ENCODE measurements at regions of chr7 and their contacts with region 1.

Region 1: DNA sequence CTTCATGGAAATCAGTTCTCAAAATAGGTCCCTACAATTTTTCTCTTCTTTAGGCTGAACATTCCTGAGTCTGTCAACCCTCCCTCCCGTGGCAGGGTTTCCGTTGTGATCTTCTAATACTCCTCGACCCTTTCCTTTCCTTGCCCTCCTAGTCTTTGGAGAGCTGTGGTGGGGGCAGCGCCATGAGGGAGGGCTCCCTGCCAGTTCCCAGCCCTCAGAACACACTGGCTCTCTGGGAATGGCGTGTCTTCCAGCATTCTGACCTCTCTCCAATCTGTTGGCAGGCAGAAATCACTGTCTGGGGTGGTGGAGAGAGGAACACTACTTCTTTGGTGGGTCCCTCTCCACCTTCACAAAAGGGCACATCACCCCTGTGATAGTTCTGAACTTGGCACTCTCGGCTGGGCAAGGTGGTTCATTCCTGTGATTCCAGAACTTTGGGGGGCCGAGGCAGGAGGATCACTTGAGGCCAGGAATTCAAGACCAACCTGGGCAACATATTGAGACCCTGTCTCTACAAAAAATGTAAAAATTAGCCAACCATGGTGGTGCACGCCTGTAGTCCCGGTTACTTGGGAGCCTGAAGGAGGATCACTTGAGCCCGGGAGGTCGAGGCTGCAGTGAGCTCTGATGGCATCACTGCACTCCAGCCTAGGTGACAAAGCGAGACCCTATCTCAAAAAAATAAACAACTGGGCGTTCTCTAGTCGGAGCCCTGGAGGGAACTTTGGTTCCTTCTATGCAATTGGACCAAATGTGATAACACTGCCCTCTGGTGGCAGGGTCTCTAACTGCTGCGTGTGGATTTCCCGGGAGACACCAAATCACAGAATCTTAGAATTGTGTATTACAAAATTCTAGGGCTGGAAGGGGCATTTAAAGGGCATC is 13.1 kb upstream of the ARPC1A start:
- DNase-seq: peak; percentile 42 to 81
- ATAC-seq: peak; percentile 54

Region 2: DNA sequence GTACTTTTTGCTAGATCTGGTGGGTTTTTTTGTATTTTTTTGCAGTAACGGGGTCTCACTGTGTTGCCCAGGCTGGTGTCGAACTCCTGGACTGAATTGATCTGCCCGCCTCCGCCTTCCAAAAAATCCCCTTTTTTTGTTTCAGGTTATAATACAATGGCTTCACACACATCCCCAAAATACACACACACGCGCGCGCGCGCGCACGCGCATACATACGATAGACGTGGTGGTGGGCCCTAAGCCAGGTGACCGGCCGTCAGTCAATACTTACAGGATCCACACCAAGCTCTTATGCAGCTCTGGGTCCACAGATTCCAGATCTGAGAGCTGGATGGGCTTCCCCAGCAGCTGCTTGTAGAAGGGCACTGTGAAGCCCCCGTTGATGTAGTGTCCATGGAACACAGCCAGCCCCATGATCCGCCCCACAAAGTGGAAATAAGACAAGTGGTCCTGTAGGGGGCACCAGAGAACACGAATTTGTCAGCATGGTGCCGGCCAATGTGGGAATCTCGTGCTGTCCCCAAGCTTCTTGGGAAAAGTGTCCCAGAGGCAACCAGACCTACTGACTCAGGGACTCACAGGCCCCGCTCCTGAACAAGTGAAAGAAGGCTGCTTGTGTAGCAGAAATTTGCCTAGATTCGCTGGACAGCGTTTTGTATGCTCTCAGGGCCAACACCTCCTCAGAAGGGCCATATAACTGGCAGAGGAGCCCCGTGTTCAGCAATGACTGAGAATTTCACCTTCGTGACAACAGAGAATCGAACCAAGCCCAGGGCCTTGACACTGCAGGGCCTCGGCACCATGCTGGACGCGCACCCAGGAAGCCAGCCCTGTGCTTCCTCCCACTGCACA is 272.2 kb before region 1 on chr7:
- intact Hi-C with region 1: loop called (anchors 5 to 10 kb)
- DNase-seq: peak; percentile 82 to 83
- ATAC-seq: peak; percentile 66

Region 3: GRCh38 chr7:99374103-99375064 is 61.8 kb after region 1 on chr7 and contains the start of gene ARPC1B:
- intact Hi-C with region 1: no loop called
- DNase-seq: peak; percentile 89 to 90
- ATAC-seq: peak; percentile 66
- total RNA-seq, gene ARPC1B: 143 to 170 TPM

Region 4: DNA sequence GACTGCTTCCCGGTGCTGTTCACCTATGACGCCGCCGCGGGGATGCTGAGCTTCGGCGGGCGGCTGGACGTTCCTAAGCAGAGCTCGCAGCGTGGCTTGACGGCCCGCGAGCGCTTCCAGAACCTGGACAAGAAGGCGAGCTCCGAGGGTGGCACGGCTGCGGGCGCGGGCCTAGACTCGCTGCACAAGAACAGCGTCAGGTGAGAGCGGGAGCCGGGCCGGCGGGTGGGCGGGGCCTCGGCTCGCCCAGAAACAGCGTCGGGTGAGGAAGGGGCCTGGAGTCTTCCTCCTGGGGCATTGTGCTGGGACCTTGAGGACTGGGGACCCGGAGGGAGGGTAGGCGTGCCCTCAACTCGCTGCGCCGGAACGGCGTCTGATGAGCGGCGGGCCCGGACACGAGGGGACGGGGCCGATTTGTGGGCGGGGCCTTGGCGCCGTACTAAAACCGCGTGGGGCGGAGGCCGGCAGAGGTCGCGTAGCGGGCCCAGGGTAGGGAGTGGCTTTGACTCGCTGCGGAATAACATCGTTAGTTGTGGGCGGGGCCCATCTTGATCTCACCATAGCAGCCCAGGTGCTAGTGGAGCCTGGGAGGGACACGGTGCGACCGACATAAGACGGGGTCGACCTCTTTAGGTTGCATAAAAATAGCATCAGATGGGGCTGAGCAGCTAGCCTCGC is 80.3 kb after region 1 on chr7:
- intact Hi-C with region 1: no loop called
- DNase-seq: peak; percentile 90 to 93
- ATAC-seq: peak; percentile 89

Region 5: GRCh38 chr7:99762680-99763327 is 450.2 kb after region 1 on chr7:
- intact Hi-C with region 1: no loop called
- DNase-seq: no peak
- ATAC-seq: no peak